Cardiac septum (tissue), 1 donor: ENCODE measurements at regions of chr9 and their contacts with region 1.

Region 1: DNA sequence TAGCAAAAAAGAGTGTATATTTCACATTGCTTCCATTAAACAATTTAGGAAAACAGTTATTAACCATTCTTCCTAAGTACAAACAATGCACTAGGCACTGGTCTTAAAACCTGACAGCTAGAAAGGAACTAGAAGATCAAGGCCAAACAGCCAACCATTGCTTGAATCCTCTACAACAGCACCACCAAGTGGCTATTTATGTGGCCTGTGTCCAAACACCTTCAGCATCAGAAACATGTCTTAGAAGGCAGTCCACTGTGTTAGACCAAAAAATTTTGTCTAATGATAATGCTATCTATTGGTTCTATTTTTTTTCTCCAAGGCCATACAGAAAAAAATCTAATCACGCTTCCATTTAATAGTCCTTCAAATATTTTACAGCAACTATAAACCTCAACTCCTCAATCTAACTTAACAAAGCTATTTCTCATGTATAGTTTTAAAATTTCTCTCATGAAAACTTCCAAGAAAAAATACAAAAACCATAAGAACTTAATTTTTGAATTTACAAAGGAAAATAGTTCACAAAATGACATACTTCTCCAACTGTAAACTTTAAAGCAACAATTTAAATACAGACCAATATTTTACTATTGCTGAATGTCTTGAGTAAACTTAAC is 36.1 kb downstream of the CAAP1 start:
- DNase-seq: no peak

Region 2: GRCh38 chr9:26768145-26768544 is 88.4 kb before region 1 on chr9:
- intact Hi-C with region 1: loop called (anchors 10 kb)
- DNase-seq: no peak

Region 3: GRCh38 chr9:26779072-26779471 is 77.5 kb before region 1 on chr9:
- intact Hi-C with region 1: no loop called
- DNase-seq: no peak

Region 4: GRCh38 chr9:26802921-26803320 is 53.6 kb before region 1 on chr9:
- intact Hi-C with region 1: no loop called
- DNase-seq: no peak

Region 5: DNA sequence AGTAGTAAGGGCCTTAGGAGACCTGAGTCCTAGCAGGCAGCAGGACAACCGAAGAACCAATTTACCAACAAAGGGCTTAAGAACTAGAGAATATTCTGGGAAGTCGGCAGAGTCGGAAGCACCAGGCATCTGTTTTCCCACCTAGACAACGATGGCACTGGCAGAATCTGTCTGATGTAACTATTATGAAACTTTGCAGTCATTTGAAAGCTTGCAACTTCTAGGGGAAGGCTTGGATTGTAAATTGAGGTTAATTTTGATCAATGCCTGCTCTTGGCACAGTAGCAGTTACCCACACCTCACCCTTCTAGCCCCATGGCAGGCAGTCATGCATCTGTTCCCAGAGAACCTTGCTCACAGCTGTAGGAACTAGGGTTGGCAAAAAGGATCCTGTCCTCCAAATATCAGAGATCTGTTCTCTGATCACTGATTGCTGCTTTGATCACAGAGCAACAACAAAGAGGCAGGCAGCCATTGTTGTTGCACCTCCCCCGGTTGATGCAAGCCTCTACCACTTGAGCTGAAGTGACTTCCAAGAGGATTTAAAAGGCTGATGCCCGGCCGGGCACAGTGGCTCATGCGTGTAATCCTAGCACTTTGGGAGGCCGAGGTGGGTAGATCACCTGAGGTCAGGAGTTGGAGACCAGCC is 79.9 kb after region 1 on chr9:
- intact Hi-C with region 1: no loop called
- DNase-seq: no peak